ENCODE measurements at regions of chr2 and their contacts with region 1.

Region 1: DNA sequence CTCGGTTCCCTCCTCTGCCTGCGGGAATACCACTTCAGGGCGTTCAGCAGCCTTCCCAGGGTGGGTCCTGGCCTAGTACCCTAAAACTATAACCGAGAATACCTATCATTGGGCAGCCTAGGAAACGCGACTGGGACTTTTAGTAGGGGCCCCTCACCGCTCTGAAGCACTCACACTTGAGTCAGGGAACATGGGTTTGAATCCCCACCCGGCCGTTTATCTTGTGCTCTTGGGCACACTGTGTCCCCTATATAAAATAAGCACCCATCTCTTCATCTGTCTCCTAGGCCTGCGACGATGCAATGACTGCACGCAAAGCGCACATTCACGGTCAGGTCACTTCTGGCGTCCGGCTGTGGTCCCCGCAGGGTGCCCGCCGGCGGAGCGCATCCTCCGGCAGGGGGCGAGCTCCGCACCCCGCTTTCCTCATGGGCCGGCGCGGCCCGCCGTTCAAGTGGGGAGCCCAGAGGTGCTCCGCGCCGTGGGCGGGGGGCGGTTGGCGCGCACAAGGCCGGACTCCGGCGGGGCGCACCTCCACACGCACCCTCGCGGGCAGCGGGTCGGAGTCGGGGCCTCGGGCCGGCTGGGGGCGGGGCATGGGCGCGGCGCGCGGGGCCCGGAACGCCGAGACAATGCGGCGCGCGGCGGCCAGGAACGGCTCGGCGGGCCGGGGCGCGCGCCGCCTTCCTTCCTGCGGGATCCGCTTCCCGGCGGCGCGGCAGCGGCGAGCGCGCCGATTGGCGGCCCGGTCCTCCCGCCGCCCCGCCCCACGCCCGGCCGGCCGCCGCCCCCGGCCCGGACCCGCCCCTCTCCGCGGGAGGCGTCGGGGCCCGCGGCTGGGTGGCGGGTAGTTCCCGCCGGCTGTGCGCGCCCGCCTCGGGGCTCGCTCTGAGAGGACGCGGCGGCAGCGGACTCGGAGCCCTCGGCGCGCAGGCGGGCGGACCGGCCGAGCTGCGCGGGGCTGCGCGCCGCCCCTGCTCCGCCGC is at the start of gene ASAP2:
- DNase-seq: no peak
- H3K4me3 ChIP-seq: peak within 1 kb of the TSS; percentile 59 to 81 (median 70)
- H3K27ac ChIP-seq: peak within 1 kb of the TSS; percentile 83 to 96 (median 88)
- H3K4me1 ChIP-seq: peaks cover 7 to 46% (median 14%) of the 10 kb centered on the region in 3 donors
- H3K27me3 ChIP-seq: peaks cover 0 to 9% (median 0%) of the 10 kb centered on the region in 4 donors
- CTCF ChIP-seq: peak; percentile 35 to 88 (median 83)
- POLR2A ChIP-seq: peak in 1 of 4 donors; percentile 43
- total RNA-seq, gene ASAP2: 3.3 to 15.3 (median 6.9) TPM

Region 2: GRCh38 chr2:8633735-8634313 is 572.4 kb before region 1 on chr2:
- intact Hi-C with region 1: no loop called
- DNase-seq: no peak
- H3K4me3 ChIP-seq: no peak overlapping the region
- H3K27ac ChIP-seq: no peak overlapping the region
- H3K4me1 ChIP-seq: peaks cover 0 to 8% (median 0%) of the 10 kb centered on the region in 3 donors
- H3K27me3 ChIP-seq: no peaks in the 10 kb centered on the region
- CTCF ChIP-seq: no peak
- POLR2A ChIP-seq: no peak

Region 3: GRCh38 chr2:8872821-8873432 is 333.3 kb before region 1 on chr2:
- intact Hi-C with region 1: no loop called
- DNase-seq: no peak
- H3K4me3 ChIP-seq: no peak overlapping the region
- H3K27ac ChIP-seq: no peak overlapping the region
- H3K4me1 ChIP-seq: no peaks in the 10 kb centered on the region
- H3K27me3 ChIP-seq: no peaks in the 10 kb centered on the region
- CTCF ChIP-seq: peak in 5 of 6 experiments; percentile 43 to 63 (median 52)
- POLR2A ChIP-seq: no peak

Region 4: GRCh38 chr2:9333591-9334171 is 127.4 kb after region 1 on chr2:
- intact Hi-C with region 1: loop called (anchors 10 kb)
- DNase-seq: no peak
- H3K4me3 ChIP-seq: no peak overlapping the region
- H3K27ac ChIP-seq: peak overlapping the region in 1 of 4 donors; percentile 18
- H3K4me1 ChIP-seq: peaks cover 5 to 30% (median 8%) of the 10 kb centered on the region in 3 donors
- H3K27me3 ChIP-seq: no peaks in the 10 kb centered on the region
- CTCF ChIP-seq: peak; percentile 26 to 86 (median 70)
- POLR2A ChIP-seq: no peak

Region 5: DNA sequence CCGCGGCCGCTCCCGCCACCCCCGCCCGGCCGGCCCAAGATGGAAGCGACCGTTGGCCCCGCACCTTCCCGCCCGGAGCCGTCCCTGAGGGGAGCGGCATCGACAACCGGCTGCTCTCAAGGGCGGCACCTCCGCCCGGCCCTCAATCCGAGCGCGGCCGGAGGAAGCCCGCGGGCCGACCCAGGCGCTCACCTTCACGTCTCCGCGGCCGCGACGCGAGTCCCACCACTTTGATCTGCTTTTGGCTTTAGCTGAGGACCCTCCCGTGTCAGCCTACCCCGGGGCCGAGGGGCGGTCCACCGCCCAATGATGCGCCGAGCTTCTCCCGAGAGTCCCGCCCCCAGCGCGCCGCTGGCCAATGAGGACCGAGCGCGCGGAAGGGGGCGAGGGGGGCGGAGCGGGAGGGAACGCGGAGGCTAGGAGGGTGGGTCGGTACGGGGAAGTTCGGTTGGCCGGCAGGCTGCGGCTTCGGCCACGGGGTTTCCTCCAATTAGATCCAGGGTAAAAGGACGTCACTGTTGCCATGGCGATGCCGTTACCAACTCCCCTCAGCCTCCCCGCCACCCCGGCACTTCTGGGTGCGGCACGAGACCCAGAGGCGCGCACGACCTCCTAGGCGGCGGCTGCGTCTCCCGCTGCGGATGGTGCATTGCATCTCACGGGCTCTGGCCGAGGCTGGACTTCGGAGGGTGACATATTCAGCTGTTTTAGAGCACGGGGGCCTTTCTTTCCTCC is 424.7 kb after region 1 on chr2 and contains the start of gene YWHAQ:
- intact Hi-C with region 1: no loop called
- DNase-seq: peak; percentile 95
- H3K4me3 ChIP-seq: peak within 1 kb of the TSS; percentile 70 to 96 (median 88)
- H3K27ac ChIP-seq: peak within 1 kb of the TSS; percentile 97 to 99 (median 97)
- H3K4me1 ChIP-seq: peaks cover 3 to 54% (median 30%) of the 10 kb centered on the region in 3 donors
- H3K27me3 ChIP-seq: no peaks in the 10 kb centered on the region
- CTCF ChIP-seq: no peak
- POLR2A ChIP-seq: peak in 3 of 4 donors; percentile 92 to 94 (median 92)
- total RNA-seq, gene YWHAQ: 141 to 442 (median 227) TPM

Region 6: GRCh38 chr2:9654429-9655100 is 448.3 kb after region 1 on chr2:
- intact Hi-C with region 1: no loop called
- DNase-seq: no peak
- H3K4me3 ChIP-seq: no peak overlapping the region
- H3K27ac ChIP-seq: no peak overlapping the region
- H3K4me1 ChIP-seq: no peaks in the 10 kb centered on the region
- H3K27me3 ChIP-seq: peaks cover 0 to 11% (median 0%) of the 10 kb centered on the region in 4 donors
- CTCF ChIP-seq: no peak
- POLR2A ChIP-seq: no peak

Measured in esophagus squamous epithelium (tissue), 5 donors.